Caco-2 (cell line): ENCODE measurements at regions of chr15 and their contacts with region 1.

Region 1: GRCh38 chr15:97248376-97248775 is 712.1 kb upstream of the ARRDC4 start:
- DNase-seq: no peak
- H3K4me3 ChIP-seq: no peak overlapping the region
- H3K4me3 Mint-ChIP-seq: no peak overlapping the region
- H3K27ac Mint-ChIP-seq: no peak overlapping the region
- H3K4me1 ChIP-seq: no peaks in the 10 kb centered on the region
- H3K4me1 Mint-ChIP-seq: no peaks in the 10 kb centered on the region
- H3K27me3 ChIP-seq: no peaks in the 10 kb centered on the region
- H3K27me3 Mint-ChIP-seq: peaks cover 10% of the 10 kb centered on the region
- CTCF ChIP-seq: no peak

Region 2: GRCh38 chr15:95259513-95259912 is 1988.9 kb before region 1 on chr15:
- CTCF ChIA-PET with region 1: interaction called, 4 read pairs
- POLR2A ChIA-PET with region 1: no interaction called
- intact Hi-C with region 1: loop called (anchors 1 kb)
- DNase-seq: peak; percentile 55 to 65
- H3K4me3 ChIP-seq: no peak overlapping the region
- H3K4me3 Mint-ChIP-seq: no peak overlapping the region
- H3K27ac Mint-ChIP-seq: no peak overlapping the region
- H3K4me1 ChIP-seq: no peaks in the 10 kb centered on the region
- H3K4me1 Mint-ChIP-seq: no peaks in the 10 kb centered on the region
- H3K27me3 ChIP-seq: no peaks in the 10 kb centered on the region
- H3K27me3 Mint-ChIP-seq: no peaks in the 10 kb centered on the region
- CTCF ChIP-seq: peak; percentile 65 to 68

Region 3: DNA sequence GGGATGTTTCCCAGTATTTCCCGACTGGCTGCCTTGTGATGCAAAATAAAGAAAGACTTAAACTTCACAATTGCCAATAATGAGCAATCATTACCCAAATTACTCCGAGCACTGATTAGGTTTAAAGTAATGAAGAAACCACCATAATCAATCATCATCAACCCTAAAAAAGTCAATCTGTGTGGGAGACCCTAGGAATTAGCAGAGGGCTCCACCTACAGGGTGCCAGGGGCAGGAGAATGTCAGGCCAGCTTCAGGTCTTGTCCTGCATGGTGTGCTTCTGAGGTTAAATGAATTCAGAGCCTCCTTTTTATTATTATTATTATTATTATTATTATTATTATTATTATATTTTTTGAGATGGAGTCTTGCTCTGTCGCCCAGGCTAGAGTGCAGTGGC is 234.1 kb after region 1 on chr15:
- CTCF ChIA-PET with region 1: no interaction called
- POLR2A ChIA-PET with region 1: no interaction called
- intact Hi-C with region 1: loop called (anchors 1 kb)
- DNase-seq: peak in 1 of 2 experiments; percentile 3
- H3K4me3 ChIP-seq: no peak overlapping the region
- H3K4me3 Mint-ChIP-seq: no peak overlapping the region
- H3K27ac Mint-ChIP-seq: no peak overlapping the region
- H3K4me1 ChIP-seq: no peaks in the 10 kb centered on the region
- H3K4me1 Mint-ChIP-seq: no peaks in the 10 kb centered on the region
- H3K27me3 ChIP-seq: no peaks in the 10 kb centered on the region
- H3K27me3 Mint-ChIP-seq: no peaks in the 10 kb centered on the region
- CTCF ChIP-seq: peak; percentile 13 to 15

Region 4: GRCh38 chr15:97759363-97759762 is 511.0 kb after region 1 on chr15:
- CTCF ChIA-PET with region 1: interaction called, 4 read pairs
- POLR2A ChIA-PET with region 1: no interaction called
- intact Hi-C with region 1: loop called (anchors 1 kb)
- DNase-seq: no peak
- H3K4me3 ChIP-seq: no peak overlapping the region
- H3K4me3 Mint-ChIP-seq: no peak overlapping the region
- H3K27ac Mint-ChIP-seq: no peak overlapping the region
- H3K4me1 ChIP-seq: no peaks in the 10 kb centered on the region
- H3K4me1 Mint-ChIP-seq: no peaks in the 10 kb centered on the region
- H3K27me3 ChIP-seq: no peaks in the 10 kb centered on the region
- H3K27me3 Mint-ChIP-seq: peaks cover 19% of the 10 kb centered on the region
- CTCF ChIP-seq: no peak